AG04449 (cell line): ENCODE measurements at regions of chr14 and their contacts with region 1.

Region 1: GRCh38 chr14:76911473-76911872 is 85.3 kb downstream of the LRRC74A start:
- DNase-seq: no peak
- H3K4me3 ChIP-seq: no peak overlapping the region
- CTCF ChIP-seq: no peak

Region 2: DNA sequence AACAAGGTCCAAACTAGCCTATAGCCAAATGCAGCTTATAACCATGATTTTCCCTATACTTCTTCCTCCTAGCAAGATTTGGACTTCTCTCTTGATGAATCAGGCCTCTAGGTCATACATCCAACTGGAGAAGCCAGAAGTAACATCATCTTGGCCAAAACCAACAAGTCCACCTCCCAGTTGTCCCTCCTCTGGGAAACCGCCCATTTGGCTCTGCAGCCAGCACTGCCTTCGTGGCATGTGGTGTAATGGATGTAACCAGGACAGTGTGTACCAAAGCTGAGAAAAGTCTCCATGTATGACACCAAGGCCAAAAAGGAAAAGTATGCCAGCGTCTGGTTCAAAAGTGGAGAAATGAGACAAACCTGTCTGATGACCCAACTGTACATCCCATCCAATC is 209.5 kb before region 1 on chr14:
- CTCF ChIA-PET with region 1: no interaction called
- POLR2A ChIA-PET with region 1: no interaction called
- DNase-seq: no peak
- H3K4me3 ChIP-seq: no peak overlapping the region
- CTCF ChIP-seq: no peak

Region 3: DNA sequence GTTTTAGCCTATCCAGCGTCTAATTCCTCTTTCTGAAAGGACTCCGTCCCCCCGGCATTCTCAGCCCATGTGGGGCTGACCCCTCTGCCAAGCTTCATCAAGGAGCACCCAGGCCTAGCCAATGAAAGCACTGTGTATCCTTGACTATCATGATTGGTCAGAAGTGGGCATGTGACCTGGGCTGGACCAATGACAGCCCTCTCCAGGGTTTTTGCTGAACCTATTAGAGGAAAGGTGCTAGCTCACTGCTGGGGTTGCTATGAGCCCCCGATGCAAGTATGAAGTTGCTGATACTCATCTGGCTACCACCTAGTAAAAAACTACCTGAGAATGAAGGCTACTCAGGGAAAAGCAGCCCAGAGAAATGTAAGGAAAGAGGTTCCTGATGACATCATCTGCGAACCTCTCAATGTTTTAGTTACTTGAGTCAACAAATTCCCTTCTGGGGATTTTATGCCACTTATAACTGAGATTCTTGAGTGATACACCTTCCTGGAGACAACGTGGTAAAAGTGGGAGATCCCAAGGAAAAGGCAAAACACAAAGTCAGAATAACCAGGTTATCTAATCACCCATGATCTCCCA is 17.1 kb before region 1 on chr14:
- CTCF ChIA-PET with region 1: interaction called, 123 read pairs
- POLR2A ChIA-PET with region 1: no interaction called
- DNase-seq: no peak
- H3K4me3 ChIP-seq: no peak overlapping the region
- CTCF ChIP-seq: no peak

Region 4: GRCh38 chr14:76937181-76938091 is 26.0 kb after region 1 on chr14:
- CTCF ChIA-PET with region 1: interaction called, 31 read pairs
- POLR2A ChIA-PET with region 1: no interaction called
- DNase-seq: no peak
- H3K4me3 ChIP-seq: no peak overlapping the region
- CTCF ChIP-seq: no peak

Region 5: DNA sequence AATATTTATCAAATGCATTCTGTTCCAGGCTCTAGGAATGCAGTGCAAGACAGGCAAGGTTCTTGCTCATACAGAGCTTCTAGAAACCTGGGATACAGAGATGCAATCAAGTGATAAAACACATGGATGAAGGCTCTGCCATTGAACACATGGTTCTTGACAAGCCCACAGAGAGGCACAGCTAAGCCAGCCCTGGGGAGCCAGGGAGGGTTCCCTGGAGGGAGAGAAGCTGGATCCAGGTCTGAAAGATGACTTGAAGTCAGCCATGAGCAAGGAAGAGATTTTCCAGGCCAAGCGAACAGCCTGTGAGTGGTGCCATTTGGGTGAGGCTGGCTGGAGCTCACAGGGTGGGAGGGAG is 50.8 kb after region 1 on chr14:
- CTCF ChIA-PET with region 1: interaction called, 17 read pairs
- POLR2A ChIA-PET with region 1: no interaction called
- DNase-seq: no peak
- H3K4me3 ChIP-seq: peak overlapping the region; percentile 48
- CTCF ChIP-seq: no peak

Region 6: GRCh38 chr14:77086017-77086736 is 174.7 kb after region 1 on chr14:
- CTCF ChIA-PET with region 1: interaction called, 1,142 read pairs
- POLR2A ChIA-PET with region 1: interaction called, 3 read pairs
- DNase-seq: no peak
- H3K4me3 ChIP-seq: no peak overlapping the region
- CTCF ChIP-seq: no peak